Psoas muscle (tissue), 8 donors: ENCODE measurements at regions of chrX and their contacts with region 1.

Region 1: GRCh38 chrX:71301195-71301924 is at the start of gene ITGB1BP2:
- DNase-seq: no peak
- ATAC-seq: peak; percentile 89 to 93 (median 93)
- H3K4me3 ChIP-seq: peak within 1 kb of the TSS; percentile 58
- H3K27ac ChIP-seq: peak within 1 kb of the TSS; percentile 80
- H3K4me1 ChIP-seq: peaks cover 4% of the 10 kb centered on the region
- H3K27me3 ChIP-seq: peaks cover 0 to 5% (median 0%) of the 10 kb centered on the region in 3 donors
- CTCF ChIP-seq: no peak
- total RNA-seq, gene ITGB1BP2: 7.8 to 35.2 (median 16.7) TPM

Region 2: GRCh38 chrX:71365876-71366673 is 64.7 kb after region 1 on chrX and contains the start of gene TAF1:
- intact Hi-C with region 1: loop called in 1 of 2 experiments (anchors 10 kb)
- DNase-seq: peak; percentile 92 to 96
- ATAC-seq: peak; percentile 92 to 95 (median 94)
- H3K4me3 ChIP-seq: peak within 1 kb of the TSS; percentile 81
- H3K27ac ChIP-seq: peak within 1 kb of the TSS; percentile 92
- H3K4me1 ChIP-seq: peaks cover 8% of the 10 kb centered on the region
- H3K27me3 ChIP-seq: no peaks in the 10 kb centered on the region
- CTCF ChIP-seq: no peak
- total RNA-seq, gene TAF1: 22.3 to 25.6 (median 24.4) TPM